HCT116 (cell line): ENCODE measurements at regions of chr6 and their contacts with region 1.

Region 1: GRCh38 chr6:20401205-20402091 is at the start of gene E2F3:
- DNase-seq: peak; percentile 100
- ATAC-seq: peak; percentile 82
- H3K4me3 ChIP-seq: peak within 1 kb of the TSS; percentile 63 to 75
- H3K27ac ChIP-seq: peak within 1 kb of the TSS; percentile 89
- H3K4me1 ChIP-seq: peaks cover 0 to 24% of the 10 kb centered on the region in 2 experiments; a peak in 2 of 4 replicates
- H3K27me3 ChIP-seq: no peaks in the 10 kb centered on the region
- CTCF ChIP-seq: no peak
- POLR2A ChIP-seq: no peak
- RAD21 ChIP-seq: no peak
- total RNA-seq, gene E2F3: 27.1 TPM

Region 2: DNA sequence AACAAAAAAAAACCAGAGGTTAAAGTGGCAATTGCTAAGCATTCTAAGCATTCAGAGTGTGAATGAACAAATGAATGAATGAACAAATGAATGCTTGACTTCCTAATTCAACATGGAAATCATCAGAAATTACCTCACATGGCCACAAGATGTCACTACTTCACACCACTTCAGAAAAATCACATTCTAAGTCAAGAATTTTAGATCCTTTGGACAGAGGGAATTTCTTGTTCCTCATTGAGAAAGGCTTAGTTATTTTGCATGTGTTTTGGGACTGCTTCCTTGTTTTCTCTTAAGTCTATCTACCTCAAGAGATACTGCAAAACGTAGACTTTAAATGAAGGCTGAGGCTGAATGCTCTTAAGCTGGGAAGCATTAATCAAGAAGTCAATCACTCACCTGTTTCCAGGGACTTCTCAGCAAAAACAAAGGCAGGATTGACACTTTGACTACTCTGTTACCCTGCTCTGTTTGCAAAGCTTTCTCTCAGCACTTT is 309.3 kb before region 1 on chr6:
- CTCF ChIA-PET with region 1: no interaction called
- POLR2A ChIA-PET with region 1: no interaction called
- RAD21 ChIA-PET with region 1: no interaction called
- intact Hi-C with region 1: loop called (anchors 10 kb)
- DNase-seq: peak; percentile 57
- ATAC-seq: peak; percentile 61
- H3K4me3 ChIP-seq: no peak overlapping the region
- H3K27ac ChIP-seq: no peak overlapping the region
- H3K4me1 ChIP-seq: no peaks in the 10 kb centered on the region
- H3K27me3 ChIP-seq: no peaks in the 10 kb centered on the region
- CTCF ChIP-seq: peak; percentile 45 to 72 (median 64); a peak in 4 of 6 replicates
- POLR2A ChIP-seq: no peak
- RAD21 ChIP-seq: peak; percentile 87

Region 3: DNA sequence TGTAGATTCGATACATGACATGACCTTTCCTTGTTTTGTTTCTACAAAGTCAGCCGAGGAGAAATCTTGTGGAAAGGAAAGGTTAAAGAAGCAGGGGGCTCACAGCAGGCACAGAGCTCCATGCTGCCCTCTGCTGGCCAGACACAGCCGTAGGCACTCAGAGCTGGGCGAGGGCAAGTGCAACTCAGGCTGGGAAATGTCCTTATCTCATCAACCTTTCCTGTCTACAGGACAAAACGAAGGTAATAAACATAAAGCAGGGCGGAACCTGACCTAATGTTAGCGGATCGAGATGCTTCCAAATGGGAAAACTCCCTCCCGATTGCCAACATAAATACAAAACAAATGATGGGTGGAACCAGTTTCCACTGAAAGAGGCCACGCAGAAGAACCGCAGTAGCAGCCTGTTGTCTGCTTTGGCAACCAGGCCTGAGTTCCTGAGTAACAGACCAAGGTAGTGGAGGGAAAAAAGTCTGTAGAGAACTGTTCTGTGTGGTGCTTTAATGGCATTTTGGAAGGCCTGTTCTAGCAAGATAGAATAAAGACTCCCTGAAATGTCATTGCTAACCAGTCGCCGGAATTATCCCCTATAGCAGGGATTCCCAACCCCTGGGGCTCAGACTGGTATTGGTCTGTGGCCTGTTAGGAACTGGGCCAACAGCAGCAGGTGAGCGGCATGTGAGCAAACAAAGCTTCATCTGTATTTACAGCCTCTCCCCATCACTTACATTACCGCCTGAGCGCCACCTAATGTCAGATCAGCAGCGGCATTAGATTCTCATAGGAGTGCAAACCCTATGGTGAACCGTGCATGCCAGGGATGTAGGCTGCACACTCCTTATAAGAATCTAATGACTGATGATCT is 274.4 kb before region 1 on chr6:
- CTCF ChIA-PET with region 1: no interaction called
- POLR2A ChIA-PET with region 1: no interaction called
- RAD21 ChIA-PET with region 1: no interaction called
- intact Hi-C with region 1: no loop called
- DNase-seq: peak; percentile 35
- ATAC-seq: peak; percentile 93
- H3K4me3 ChIP-seq: no peak overlapping the region
- H3K27ac ChIP-seq: no peak overlapping the region; the same call in 1 of the 2 replicates
- H3K4me1 ChIP-seq: peaks cover 15 to 38% of the 10 kb centered on the region in 2 experiments; a peak in 3 of 4 replicates
- H3K27me3 ChIP-seq: no peaks in the 10 kb centered on the region
- CTCF ChIP-seq: peak; percentile 66 to 99 (median 97); a peak in 5 of 6 replicates
- POLR2A ChIP-seq: no peak
- RAD21 ChIP-seq: peak; percentile 61

Region 4: DNA sequence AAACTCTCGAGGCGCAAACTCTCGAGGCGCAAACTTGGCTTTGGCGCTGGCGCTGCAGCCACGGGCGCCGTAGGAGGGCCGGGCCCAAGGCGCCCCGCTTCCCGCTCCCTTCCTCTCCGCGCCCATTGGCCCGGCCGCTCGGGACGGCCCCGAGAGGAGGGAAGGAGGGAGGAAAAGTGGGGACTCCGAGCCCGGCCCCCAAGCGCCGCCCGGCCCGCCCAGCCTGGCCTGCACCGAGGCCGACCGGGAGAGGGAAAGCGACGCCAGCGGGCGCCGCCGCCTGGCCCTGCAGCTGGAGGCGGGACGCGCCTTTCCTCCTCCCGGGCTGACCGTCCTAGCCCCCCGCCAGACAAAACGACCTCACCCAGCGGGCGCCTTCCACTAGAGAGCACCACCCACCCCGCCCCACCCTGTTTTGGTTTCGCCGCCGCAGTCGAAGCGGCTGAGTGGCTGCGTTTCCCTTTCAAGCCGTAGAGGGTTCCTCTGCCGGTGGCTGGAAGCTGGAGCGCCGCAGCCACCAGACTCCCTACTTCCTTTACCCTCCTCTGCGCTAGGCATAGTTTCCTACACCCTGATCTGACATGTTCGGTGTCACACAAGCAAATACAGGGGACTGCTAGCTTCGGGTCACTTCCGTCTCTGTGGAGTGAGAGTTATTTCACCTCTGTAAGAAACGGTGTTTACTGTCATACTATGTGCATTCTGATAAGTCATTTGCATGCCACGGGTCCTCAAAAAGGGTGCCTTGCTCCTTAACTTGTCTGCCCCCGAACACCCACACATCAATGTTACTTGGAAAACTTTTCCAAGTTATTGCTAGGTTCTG is 188.8 kb before region 1 on chr6 and contains the start of gene MBOAT1:
- CTCF ChIA-PET with region 1: no interaction called
- POLR2A ChIA-PET with region 1: no interaction called
- RAD21 ChIA-PET with region 1: no interaction called
- intact Hi-C with region 1: loop called (anchors 5 kb)
- DNase-seq: peak; percentile 68
- ATAC-seq: peak; percentile 95
- H3K4me3 ChIP-seq: peak within 1 kb of the TSS; percentile 72 to 78
- H3K27ac ChIP-seq: peak within 1 kb of the TSS; percentile 70
- H3K4me1 ChIP-seq: peaks cover 7 to 33% of the 10 kb centered on the region in 2 experiments; a peak in 3 of 4 replicates
- H3K27me3 ChIP-seq: no peaks in the 10 kb centered on the region
- CTCF ChIP-seq: no peak
- POLR2A ChIP-seq: peak; percentile 21
- RAD21 ChIP-seq: peak; percentile 22
- total RNA-seq, gene MBOAT1: 11.7 TPM

Region 5: GRCh38 chr6:20291764-20292580 is 109.5 kb before region 1 on chr6:
- CTCF ChIA-PET with region 1: no interaction called
- POLR2A ChIA-PET with region 1: no interaction called
- RAD21 ChIA-PET with region 1: no interaction called
- intact Hi-C with region 1: loop called (anchors 5 kb)
- DNase-seq: peak; percentile 84
- ATAC-seq: peak; percentile 98
- H3K4me3 ChIP-seq: no peak overlapping the region
- H3K27ac ChIP-seq: no peak overlapping the region
- H3K4me1 ChIP-seq: peaks cover 3 to 14% of the 10 kb centered on the region in 2 experiments; a peak in 3 of 4 replicates
- H3K27me3 ChIP-seq: no peaks in the 10 kb centered on the region
- CTCF ChIP-seq: peak; percentile 77 to 85 (median 85)
- POLR2A ChIP-seq: no peak
- RAD21 ChIP-seq: peak; percentile 90

Region 6: DNA sequence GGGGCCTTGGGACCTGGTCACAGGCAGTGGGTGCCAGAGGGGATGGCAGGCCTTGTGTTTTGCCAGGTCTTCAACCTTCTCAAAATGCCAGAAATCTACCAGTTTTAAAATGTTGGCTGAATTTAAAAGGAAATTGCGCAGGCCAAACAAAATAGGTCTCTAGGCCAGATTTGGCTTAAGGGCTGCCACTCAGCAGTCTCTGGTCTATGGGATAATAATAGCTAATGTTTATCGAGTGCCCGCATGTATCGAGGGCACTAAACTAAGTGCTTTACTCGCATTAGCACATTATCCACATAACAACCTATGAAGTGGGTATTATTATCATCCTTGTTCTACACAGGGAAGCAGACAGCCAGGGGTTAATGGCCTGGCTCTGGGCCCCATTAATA is 11.2 kb after region 1 on chr6:
- CTCF ChIA-PET with region 1: interaction called, 12 read pairs
- POLR2A ChIA-PET with region 1: interaction called, 5 read pairs
- RAD21 ChIA-PET with region 1: no interaction called
- intact Hi-C with region 1: no loop called
- DNase-seq: no peak
- ATAC-seq: no peak
- H3K4me3 ChIP-seq: no peak overlapping the region
- H3K27ac ChIP-seq: no peak overlapping the region
- H3K4me1 ChIP-seq: no peaks in the 10 kb centered on the region; a peak in 1 of 4 replicates
- H3K27me3 ChIP-seq: no peaks in the 10 kb centered on the region
- CTCF ChIP-seq: no peak
- POLR2A ChIP-seq: no peak
- RAD21 ChIP-seq: no peak

Region 7: DNA sequence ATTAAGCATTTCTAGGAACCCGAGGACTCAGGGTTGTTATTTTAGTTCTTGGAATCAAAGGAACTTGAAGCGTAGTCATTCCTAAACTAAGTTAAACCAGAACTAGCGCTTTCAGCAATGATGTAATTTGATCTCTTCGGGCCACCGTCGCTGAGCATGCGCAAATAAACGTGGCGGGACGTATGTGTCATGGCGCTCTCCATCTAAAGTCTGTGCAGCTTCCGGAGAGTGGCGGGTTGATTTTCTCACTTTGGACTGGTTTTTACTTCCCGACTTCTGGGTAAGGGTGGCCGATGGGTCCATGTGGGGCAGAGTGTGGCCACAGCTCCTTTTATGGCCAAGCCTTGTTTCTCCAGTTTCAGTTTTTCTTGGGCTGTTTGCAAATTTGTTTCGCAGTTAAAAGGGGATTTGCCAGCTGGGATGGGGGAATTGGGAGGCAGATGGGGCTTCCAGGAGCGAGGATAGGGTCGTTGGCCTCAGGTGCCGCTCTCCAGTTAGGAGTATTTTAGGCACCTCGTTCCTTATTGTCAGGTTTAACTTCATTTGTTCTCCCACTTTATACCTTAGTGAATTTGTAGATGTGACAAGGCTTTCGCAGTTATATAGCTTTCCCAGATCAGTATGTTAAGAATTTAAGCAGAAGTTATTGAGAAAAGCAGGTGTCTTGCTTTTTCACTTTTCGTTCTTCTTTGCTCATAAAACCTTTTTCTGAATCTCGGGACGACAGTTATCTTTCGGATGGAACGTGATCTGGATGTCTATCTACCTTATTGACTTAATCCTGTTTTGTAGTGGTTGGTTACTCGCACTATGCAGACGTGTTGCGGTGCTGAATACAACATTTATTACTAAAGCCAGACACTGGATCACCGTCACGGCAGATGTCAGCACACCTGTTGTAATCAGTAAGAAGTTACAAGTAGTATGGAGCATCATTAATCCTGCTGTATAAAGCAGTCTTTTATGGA is 133.1 kb after region 1 on chr6 and contains the start of gene CDKAL1:
- CTCF ChIA-PET with region 1: interaction called, 4 read pairs
- POLR2A ChIA-PET with region 1: interaction called, 4 read pairs
- RAD21 ChIA-PET with region 1: no interaction called
- intact Hi-C with region 1: loop called (anchors 1 kb)
- DNase-seq: peak; percentile 89
- ATAC-seq: peak; percentile 85
- H3K4me3 ChIP-seq: peak within 1 kb of the TSS; percentile 69 to 72
- H3K27ac ChIP-seq: peak within 1 kb of the TSS; percentile 64
- H3K4me1 ChIP-seq: peaks cover 4 to 18% of the 10 kb centered on the region in 2 experiments; a peak in 3 of 4 replicates
- H3K27me3 ChIP-seq: no peaks in the 10 kb centered on the region
- CTCF ChIP-seq: no peak
- POLR2A ChIP-seq: peak; percentile 84
- RAD21 ChIP-seq: peak; percentile 2; the same call in 1 of the 2 replicates
- total RNA-seq, gene CDKAL1: 14.9 TPM

Region 8: DNA sequence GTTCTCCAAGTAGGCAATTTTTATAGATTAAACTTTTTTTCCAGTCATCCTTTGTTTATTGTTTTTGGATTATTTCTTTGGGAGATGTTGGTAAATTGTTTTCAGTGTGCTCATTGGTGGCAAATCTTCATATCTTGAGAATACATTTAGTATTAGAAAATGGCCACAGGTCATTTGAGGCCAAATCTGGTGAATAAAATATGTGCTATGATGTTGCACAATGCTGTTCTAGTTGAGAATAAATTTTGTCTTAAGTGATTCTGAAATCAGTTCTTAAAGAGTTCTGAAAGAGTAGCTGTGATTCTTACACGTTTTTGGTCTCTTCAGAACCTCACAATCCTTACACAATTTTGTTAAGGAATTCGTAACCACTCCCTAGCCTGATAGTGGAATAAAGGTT is 152.9 kb after region 1 on chr6:
- CTCF ChIA-PET with region 1: interaction called, 10 read pairs
- POLR2A ChIA-PET with region 1: no interaction called
- RAD21 ChIA-PET with region 1: interaction called in 1 of 2 experiments, 3 read pairs
- intact Hi-C with region 1: no loop called
- DNase-seq: no peak
- ATAC-seq: no peak
- H3K4me3 ChIP-seq: no peak overlapping the region
- H3K27ac ChIP-seq: no peak overlapping the region
- H3K4me1 ChIP-seq: no peaks in the 10 kb centered on the region
- H3K27me3 ChIP-seq: no peaks in the 10 kb centered on the region
- CTCF ChIP-seq: no peak
- POLR2A ChIP-seq: no peak
- RAD21 ChIP-seq: no peak